K562 (cell line): ENCODE measurements at regions of chr11 and their contacts with region 1.

Region 1: GRCh38 chr11:65888163-65888814 is at the start of gene FIBP:
- DNase-seq: peak; percentile 94 to 99 (median 96)
- ATAC-seq: peak; percentile 67
- H3K4me3 ChIP-seq: peak within 1 kb of the TSS; percentile 69
- H3K27ac ChIP-seq: peak within 1 kb of the TSS; percentile 85
- H3K4me1 ChIP-seq: peaks cover 28 to 62% of the 10 kb centered on the region in 2 experiments
- H3K27me3 ChIP-seq: no peaks in the 10 kb centered on the region
- CTCF ChIP-seq: peak; percentile 91 to 98 (median 93)
- EP300 ChIP-seq: peak; percentile 23; the same call in 1 of the 2 replicates
- POLR2A ChIP-seq: peak; percentile 89
- RAD21 ChIP-seq: peak; percentile 60 to 67
- polyA plus RNA-seq, gene FIBP: 41.2 to 46.2 TPM

Region 2: DNA sequence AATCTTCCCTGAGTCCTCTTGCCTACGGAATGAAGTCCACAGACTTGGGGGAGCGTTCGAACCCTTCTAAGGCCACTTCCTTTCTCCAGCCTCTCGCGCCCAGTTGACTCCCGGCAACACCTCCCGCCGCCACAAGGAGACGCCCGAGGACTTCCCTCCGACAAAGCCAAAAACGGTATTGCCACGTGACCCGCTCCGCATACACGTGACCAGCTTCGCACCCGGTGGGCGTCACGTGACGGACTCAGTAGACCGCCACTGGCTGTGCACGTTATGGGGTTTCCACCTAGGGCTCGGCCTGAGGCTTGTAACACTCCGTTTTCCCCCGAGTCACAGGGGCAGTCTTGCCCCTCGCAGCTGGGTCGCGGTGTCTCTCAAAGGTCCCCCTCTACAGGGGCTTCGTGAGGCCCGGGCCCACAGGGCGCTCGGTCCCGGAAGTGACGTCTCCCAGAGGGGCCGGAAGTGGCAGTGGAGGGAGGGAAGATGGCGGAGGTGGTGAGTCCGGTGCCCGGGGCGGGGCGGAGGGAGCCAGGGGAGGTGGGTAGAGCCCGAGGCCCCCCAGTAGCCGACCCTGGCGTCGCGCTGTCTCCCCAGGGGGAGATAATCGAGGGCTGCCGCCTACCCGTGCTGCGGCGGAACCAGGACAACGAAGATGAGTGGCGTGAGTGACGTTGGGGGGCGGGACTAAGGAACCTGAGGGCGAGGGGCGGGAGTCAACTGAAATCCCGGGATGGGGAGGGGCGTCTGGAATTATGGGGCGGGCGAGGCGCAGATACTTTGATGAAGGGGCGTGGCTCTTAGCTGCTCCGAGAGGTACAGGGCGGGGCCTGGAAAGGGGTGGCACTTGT is 176.3 kb before region 1 on chr11 and contains the start of gene KAT5:
- CTCF ChIA-PET with region 1: interaction called, 12 read pairs
- POLR2A ChIA-PET with region 1: no interaction called
- in situ Hi-C with region 1: no loop called
- intact Hi-C with region 1: loop called (anchors 5 kb)
- DNase-seq: peak; percentile 93 to 99 (median 95)
- ATAC-seq: peak; percentile 93
- H3K4me3 ChIP-seq: peak within 1 kb of the TSS; percentile 59
- H3K27ac ChIP-seq: peak within 1 kb of the TSS; percentile 98
- H3K4me1 ChIP-seq: peaks cover 17 to 28% of the 10 kb centered on the region in 2 experiments
- H3K27me3 ChIP-seq: no peaks in the 10 kb centered on the region
- CTCF ChIP-seq: peak; percentile 97 to 99 (median 98)
- EP300 ChIP-seq: 0 out of 2 replicates have a peak, but pooled peaks have one; percentile 34
- POLR2A ChIP-seq: peak; percentile 93
- RAD21 ChIP-seq: peak; percentile 96 to 97
- polyA plus RNA-seq, gene KAT5: 3.6 to 12.9 TPM

Region 3: GRCh38 chr11:65850831-65851811 is 37.2 kb before region 1 on chr11:
- CTCF ChIA-PET with region 1: no interaction called
- POLR2A ChIA-PET with region 1: interaction called, 23 read pairs
- in situ Hi-C with region 1: no loop called
- intact Hi-C with region 1: no loop called
- DNase-seq: peak; percentile 53 to 75 (median 66)
- ATAC-seq: peak; percentile 60
- H3K4me3 ChIP-seq: no peak overlapping the region
- H3K27ac ChIP-seq: no peak overlapping the region
- H3K4me1 ChIP-seq: peaks cover under 1 to 31% of the 10 kb centered on the region in 2 experiments; a peak in 3 of 5 replicates
- H3K27me3 ChIP-seq: no peaks in the 10 kb centered on the region
- CTCF ChIP-seq: peak; percentile 50 to 83 (median 54)
- EP300 ChIP-seq: no peak
- POLR2A ChIP-seq: no peak
- RAD21 ChIP-seq: peak in 1 of 2 experiments; percentile 19; a peak in 1 of 4 replicates

Region 4: DNA sequence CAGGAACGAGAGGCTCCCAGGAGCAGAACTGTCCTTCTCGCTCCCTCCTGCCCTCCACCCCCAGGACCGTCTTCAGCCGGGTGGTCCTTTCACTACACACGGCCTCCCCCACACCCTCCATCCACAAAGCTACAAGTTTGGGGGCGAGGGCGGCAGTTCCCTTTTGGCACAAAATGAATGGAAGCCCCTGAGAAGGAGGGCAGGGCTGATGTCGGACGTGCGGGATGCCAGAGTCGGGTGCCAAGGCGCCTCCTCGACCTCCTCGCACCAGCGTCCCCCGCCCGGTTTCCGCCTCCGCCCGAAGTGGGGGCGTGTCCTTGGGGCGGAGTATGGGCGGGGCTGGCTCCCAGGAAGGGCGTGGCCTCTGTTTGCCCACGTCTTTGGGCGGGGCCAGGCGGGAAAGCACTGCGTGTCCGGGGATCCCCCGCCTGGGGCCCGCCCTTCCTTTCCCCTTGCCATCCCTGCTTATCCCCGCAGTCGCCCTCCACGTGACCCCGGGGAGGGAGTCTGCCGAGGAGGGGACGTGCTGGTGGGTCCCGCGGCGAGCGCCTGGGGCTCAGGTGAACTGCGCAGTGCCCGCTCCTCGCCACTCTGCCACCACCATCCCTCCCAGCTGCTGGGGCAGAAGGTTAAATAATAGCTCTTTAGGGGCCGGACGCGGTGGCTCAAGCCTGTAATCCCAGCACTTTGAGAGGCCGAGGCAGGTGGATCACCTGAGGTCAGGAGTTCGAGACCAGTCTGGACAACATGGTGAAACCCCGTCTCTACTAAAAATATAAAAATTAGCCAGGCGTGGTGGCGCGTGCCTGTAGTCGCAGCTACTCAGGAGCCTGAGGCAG is 14.8 kb before region 1 on chr11:
- CTCF ChIA-PET with region 1: interaction called, 3 read pairs
- POLR2A ChIA-PET with region 1: interaction called, 147 read pairs
- in situ Hi-C with region 1: no loop called
- intact Hi-C with region 1: no loop called
- DNase-seq: peak; percentile 92 to 98 (median 97)
- ATAC-seq: peak; percentile 86
- H3K4me3 ChIP-seq: peak overlapping the region; percentile 46
- H3K27ac ChIP-seq: peak overlapping the region; percentile 73
- H3K4me1 ChIP-seq: peaks cover 11 to 42% of the 10 kb centered on the region in 2 experiments
- H3K27me3 ChIP-seq: no peaks in the 10 kb centered on the region
- CTCF ChIP-seq: no peak
- EP300 ChIP-seq: no peak
- POLR2A ChIP-seq: peak; percentile 79
- RAD21 ChIP-seq: no peak

Region 5: GRCh38 chr11:65911682-65912568 is 23.6 kb after region 1 on chr11:
- CTCF ChIA-PET with region 1: interaction called, 5 read pairs
- POLR2A ChIA-PET with region 1: interaction called, 12 read pairs
- in situ Hi-C with region 1: no loop called
- intact Hi-C with region 1: loop called (anchors 2 kb)
- DNase-seq: peak; percentile 33 to 77 (median 48)
- ATAC-seq: peak; percentile 63
- H3K4me3 ChIP-seq: no peak overlapping the region
- H3K27ac ChIP-seq: peak overlapping the region; percentile 54; the same call in 2 of the 3 replicates
- H3K4me1 ChIP-seq: peaks cover 41 to 42% of the 10 kb centered on the region in 2 experiments
- H3K27me3 ChIP-seq: no peaks in the 10 kb centered on the region
- CTCF ChIP-seq: peak; percentile 55 to 76 (median 58)
- EP300 ChIP-seq: no peak
- POLR2A ChIP-seq: no peak
- RAD21 ChIP-seq: peak; percentile 43 to 74; a peak in 3 of 4 replicates

Region 6: GRCh38 chr11:65988791-65989592 is 100.7 kb after region 1 on chr11:
- CTCF ChIA-PET with region 1: interaction called, 40 read pairs
- POLR2A ChIA-PET with region 1: interaction called, 12 read pairs
- in situ Hi-C with region 1: loop called (anchors 5 kb)
- intact Hi-C with region 1: loop called (anchors 1 kb)
- DNase-seq: peak; percentile 75 to 96 (median 82)
- ATAC-seq: peak; percentile 100
- H3K4me3 ChIP-seq: no peak overlapping the region
- H3K27ac ChIP-seq: no peak overlapping the region
- H3K4me1 ChIP-seq: 0 out of 5 replicates have a peak, but pooled peaks cover 0 to 3% of the 10 kb centered on the region in 2 experiments
- H3K27me3 ChIP-seq: no peaks in the 10 kb centered on the region
- CTCF ChIP-seq: peak; percentile 99 to 100 (median 99)
- EP300 ChIP-seq: peak; percentile 29; the same call in 1 of the 2 replicates
- POLR2A ChIP-seq: no peak
- RAD21 ChIP-seq: peak; percentile 99